ENCODE measurements at regions of chr2 and their contacts with region 1.

Region 1: DNA sequence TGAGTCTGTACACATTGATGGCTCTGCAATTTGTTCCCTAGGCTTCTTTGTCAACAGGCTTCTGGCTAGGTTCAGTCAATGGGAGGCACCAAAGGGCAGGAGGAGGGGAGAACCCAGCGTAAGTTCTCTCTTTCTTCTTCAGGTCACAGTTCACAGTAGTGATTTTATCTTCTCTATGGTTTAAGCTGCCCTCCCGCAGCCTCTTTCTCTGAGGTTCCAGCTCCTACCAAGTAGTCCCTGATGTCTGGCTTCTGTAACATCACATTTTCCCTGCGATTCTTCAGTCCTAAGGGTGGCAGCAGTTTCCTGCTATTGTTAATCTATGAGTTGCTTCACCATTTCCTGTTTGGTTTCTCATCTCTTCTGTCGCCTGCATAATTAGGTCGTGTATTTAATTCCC is 107.4 kb downstream of the CPO start:
- DNase-seq: peak; percentile 37 to 62 (median 45)
- H3K4me3 ChIP-seq: no peak overlapping the region
- H3K4me3 Mint-ChIP-seq: peak overlapping the region in 7 of 8 donors; percentile 0 to 55 (median 23)
- H3K27ac ChIP-seq: no peak overlapping the region
- H3K27ac Mint-ChIP-seq: peak overlapping the region in 6 of 7 donors; percentile 10 to 84 (median 52)
- H3K4me1 ChIP-seq: peaks cover 9% of the 10 kb centered on the region
- H3K4me1 Mint-ChIP-seq: peaks cover 11 to 15% (median 13%) of the 10 kb centered on the region in 4 donors
- H3K27me3 ChIP-seq: no peaks in the 10 kb centered on the region
- H3K27me3 Mint-ChIP-seq: peaks cover 0 to 2% of the 10 kb centered on the region in 2 donors

Region 2: GRCh38 chr2:206800506-206801417 is 246.0 kb before region 1 on chr2:
- CTCF ChIA-PET with region 1: no interaction called
- POLR2A ChIA-PET with region 1: no interaction called
- intact Hi-C with region 1: loop called (anchors 1 kb)
- DNase-seq: peak in 4 of 5 donors; percentile 37 to 41 (median 39)
- H3K4me3 ChIP-seq: no peak overlapping the region
- H3K4me3 Mint-ChIP-seq: peak overlapping the region; percentile 53 to 72 (median 63)
- H3K27ac ChIP-seq: no peak overlapping the region
- H3K27ac Mint-ChIP-seq: peak overlapping the region in 3 of 7 donors; percentile 22 to 67 (median 41)
- H3K4me1 ChIP-seq: peaks cover 3% of the 10 kb centered on the region
- H3K4me1 Mint-ChIP-seq: peaks cover 7 to 15% (median 9%) of the 10 kb centered on the region in 4 donors
- H3K27me3 ChIP-seq: no peaks in the 10 kb centered on the region
- H3K27me3 Mint-ChIP-seq: no peaks in the 10 kb centered on the region

Region 3: GRCh38 chr2:206856513-206856912 is 190.2 kb before region 1 on chr2:
- CTCF ChIA-PET with region 1: no interaction called
- POLR2A ChIA-PET with region 1: no interaction called
- intact Hi-C with region 1: no loop called
- DNase-seq: no peak
- H3K4me3 ChIP-seq: no peak overlapping the region
- H3K4me3 Mint-ChIP-seq: peak overlapping the region in 1 of 8 donors; percentile 5
- H3K27ac ChIP-seq: no peak overlapping the region
- H3K27ac Mint-ChIP-seq: no peak overlapping the region
- H3K4me1 ChIP-seq: peaks cover 15% of the 10 kb centered on the region
- H3K4me1 Mint-ChIP-seq: peaks cover 16 to 20% (median 17%) of the 10 kb centered on the region in 4 donors
- H3K27me3 ChIP-seq: no peaks in the 10 kb centered on the region
- H3K27me3 Mint-ChIP-seq: no peaks in the 10 kb centered on the region

Region 4: GRCh38 chr2:206937555-206937954 is 109.2 kb before region 1 on chr2:
- CTCF ChIA-PET with region 1: no interaction called
- POLR2A ChIA-PET with region 1: no interaction called
- intact Hi-C with region 1: no loop called
- DNase-seq: no peak
- H3K4me3 ChIP-seq: no peak overlapping the region
- H3K4me3 Mint-ChIP-seq: no peak overlapping the region
- H3K27ac ChIP-seq: no peak overlapping the region
- H3K27ac Mint-ChIP-seq: no peak overlapping the region
- H3K4me1 ChIP-seq: no peaks in the 10 kb centered on the region
- H3K4me1 Mint-ChIP-seq: no peaks in the 10 kb centered on the region
- H3K27me3 ChIP-seq: no peaks in the 10 kb centered on the region
- H3K27me3 Mint-ChIP-seq: no peaks in the 10 kb centered on the region

Region 5: DNA sequence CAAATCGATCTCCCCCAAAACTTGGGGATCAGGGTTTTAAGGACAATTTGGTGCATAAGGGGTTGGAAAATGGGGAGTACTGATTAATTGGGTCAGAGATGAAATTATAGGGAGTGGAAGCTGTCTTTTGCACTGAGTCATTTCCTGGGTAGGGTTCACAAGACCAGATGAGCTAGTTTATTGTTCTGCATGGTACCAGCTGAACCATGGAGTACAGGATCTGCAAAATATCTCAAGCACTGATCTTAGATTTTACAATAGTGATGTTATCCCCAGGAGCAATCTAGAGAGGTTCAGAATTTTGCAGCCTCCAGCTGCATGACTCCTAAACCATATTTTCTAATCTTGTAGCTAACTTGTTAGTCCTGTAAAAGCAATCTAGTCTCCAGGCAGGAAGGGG is 34.3 kb before region 1 on chr2:
- CTCF ChIA-PET with region 1: no interaction called
- POLR2A ChIA-PET with region 1: no interaction called
- intact Hi-C with region 1: no loop called
- DNase-seq: no peak
- H3K4me3 ChIP-seq: no peak overlapping the region
- H3K4me3 Mint-ChIP-seq: no peak overlapping the region
- H3K27ac ChIP-seq: no peak overlapping the region
- H3K27ac Mint-ChIP-seq: no peak overlapping the region
- H3K4me1 ChIP-seq: no peaks in the 10 kb centered on the region
- H3K4me1 Mint-ChIP-seq: peaks cover 0 to 2% (median 0%) of the 10 kb centered on the region in 4 donors
- H3K27me3 ChIP-seq: no peaks in the 10 kb centered on the region
- H3K27me3 Mint-ChIP-seq: peaks cover 0 to 2% of the 10 kb centered on the region in 2 donors

Region 6: DNA sequence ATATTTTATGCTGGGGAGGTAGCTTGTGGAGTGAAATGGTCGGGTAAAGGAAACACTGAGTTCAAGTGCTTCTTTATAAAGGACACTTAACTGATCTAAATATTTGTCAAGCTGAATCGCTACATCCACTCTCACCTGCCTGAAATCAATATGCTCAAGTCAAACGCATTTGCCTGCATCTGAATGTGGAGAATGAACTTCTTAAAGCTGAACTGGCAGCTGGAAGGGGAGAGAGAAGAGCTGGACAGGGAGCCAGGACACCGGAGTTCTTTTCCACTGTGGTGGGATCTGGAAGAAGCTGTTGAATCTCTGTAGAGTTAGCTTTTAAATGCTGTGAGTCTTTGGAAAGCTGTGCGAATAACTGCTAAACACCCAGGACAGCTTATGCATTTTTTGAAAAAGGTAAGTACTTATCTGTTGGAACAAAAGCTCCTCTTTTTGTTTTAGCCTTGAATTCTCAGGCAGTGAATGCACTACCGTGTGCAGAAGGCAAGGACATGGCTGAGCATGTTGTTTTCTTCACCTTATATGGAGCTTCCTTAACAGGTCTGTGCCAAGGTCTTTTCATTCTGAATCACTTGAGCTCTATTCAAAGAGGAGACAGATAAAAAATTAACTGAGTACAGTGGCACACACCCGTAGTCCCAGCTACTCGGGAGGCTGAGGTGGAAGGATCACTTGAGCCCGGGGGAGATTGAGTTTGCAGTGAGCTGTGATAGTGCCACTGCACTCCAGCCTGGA is 193.2 kb after region 1 on chr2:
- CTCF ChIA-PET with region 1: no interaction called
- POLR2A ChIA-PET with region 1: no interaction called
- intact Hi-C with region 1: loop called (anchors 5 kb)
- DNase-seq: no peak
- H3K4me3 ChIP-seq: no peak overlapping the region
- H3K4me3 Mint-ChIP-seq: peak overlapping the region in 2 of 8 donors; percentile 34 to 52
- H3K27ac ChIP-seq: no peak overlapping the region
- H3K27ac Mint-ChIP-seq: no peak overlapping the region
- H3K4me1 ChIP-seq: peaks cover 11% of the 10 kb centered on the region
- H3K4me1 Mint-ChIP-seq: peaks cover 0 to 10% (median 6%) of the 10 kb centered on the region in 4 donors
- H3K27me3 ChIP-seq: no peaks in the 10 kb centered on the region
- H3K27me3 Mint-ChIP-seq: no peaks in the 10 kb centered on the region

Region 7: DNA sequence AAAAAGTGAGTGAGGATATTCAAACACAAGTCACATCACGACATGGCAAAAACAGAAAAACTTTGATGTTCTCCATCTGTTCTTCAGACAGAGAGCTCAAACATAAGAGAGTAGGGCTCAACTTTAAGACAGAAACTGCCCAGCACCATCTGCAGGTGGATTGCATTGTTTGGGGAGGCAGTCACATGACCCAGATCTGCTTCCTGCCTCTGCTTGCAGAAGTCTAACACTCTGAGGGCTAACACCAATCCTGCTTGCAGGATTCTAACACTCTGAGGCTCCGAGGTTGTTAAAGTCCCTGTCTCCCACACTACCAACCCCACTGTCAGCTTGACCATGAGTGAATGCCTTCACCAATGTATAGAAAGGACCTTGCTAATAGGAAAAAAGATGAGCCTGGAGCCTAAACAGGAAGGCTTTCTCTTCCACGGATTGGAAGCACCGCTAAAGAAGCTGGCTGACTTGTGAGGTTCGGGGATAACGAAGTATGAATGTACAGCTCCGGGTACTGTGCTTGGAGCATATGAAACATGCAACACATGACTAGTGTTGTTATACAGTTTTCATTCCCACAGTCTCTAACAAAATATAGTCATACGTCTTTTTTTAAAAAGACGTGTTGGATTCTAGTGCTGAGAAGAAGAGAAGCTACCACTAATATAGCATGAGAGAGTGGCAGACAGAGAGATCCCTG is 306.4 kb after region 1 on chr2:
- CTCF ChIA-PET with region 1: interaction called, 12 read pairs
- POLR2A ChIA-PET with region 1: no interaction called
- intact Hi-C with region 1: loop called (anchors 2 kb)
- DNase-seq: peak in 3 of 5 donors; percentile 13 to 25 (median 19)
- H3K4me3 ChIP-seq: no peak overlapping the region
- H3K4me3 Mint-ChIP-seq: no peak overlapping the region
- H3K27ac ChIP-seq: no peak overlapping the region
- H3K27ac Mint-ChIP-seq: peak overlapping the region in 2 of 7 donors; percentile 44 to 53
- H3K4me1 ChIP-seq: no peaks in the 10 kb centered on the region
- H3K4me1 Mint-ChIP-seq: peaks cover 5 to 9% (median 8%) of the 10 kb centered on the region in 4 donors
- H3K27me3 ChIP-seq: no peaks in the 10 kb centered on the region
- H3K27me3 Mint-ChIP-seq: no peaks in the 10 kb centered on the region

Measured in CD4-positive, alpha-beta memory T cell (primary cell).